ENCODE measurements at regions of chr16 and their contacts with region 1.

Region 1: GRCh38 chr16:76278980-76279379 is 1.8 kb downstream of the CNTNAP4 start:
- DNase-seq: no peak
- H3K4me3 ChIP-seq: no peak overlapping the region
- H3K27ac ChIP-seq: no peak overlapping the region
- H3K4me1 ChIP-seq: no peaks in the 10 kb centered on the region
- H3K27me3 ChIP-seq: no peaks in the 10 kb centered on the region
- CTCF ChIP-seq: peak in 2 of 3 donors; percentile 21
- POLR2A ChIP-seq: no peak

Region 2: GRCh38 chr16:76370344-76370743 is 91.4 kb after region 1 on chr16:
- intact Hi-C with region 1: loop called (anchors 2 kb)
- DNase-seq: no peak
- H3K4me3 ChIP-seq: no peak overlapping the region
- H3K27ac ChIP-seq: no peak overlapping the region
- H3K4me1 ChIP-seq: no peaks in the 10 kb centered on the region
- H3K27me3 ChIP-seq: no peaks in the 10 kb centered on the region
- CTCF ChIP-seq: no peak
- POLR2A ChIP-seq: no peak